IMR-90 (cell line): ENCODE measurements at regions of chr21 and their contacts with region 1.

Region 1: DNA sequence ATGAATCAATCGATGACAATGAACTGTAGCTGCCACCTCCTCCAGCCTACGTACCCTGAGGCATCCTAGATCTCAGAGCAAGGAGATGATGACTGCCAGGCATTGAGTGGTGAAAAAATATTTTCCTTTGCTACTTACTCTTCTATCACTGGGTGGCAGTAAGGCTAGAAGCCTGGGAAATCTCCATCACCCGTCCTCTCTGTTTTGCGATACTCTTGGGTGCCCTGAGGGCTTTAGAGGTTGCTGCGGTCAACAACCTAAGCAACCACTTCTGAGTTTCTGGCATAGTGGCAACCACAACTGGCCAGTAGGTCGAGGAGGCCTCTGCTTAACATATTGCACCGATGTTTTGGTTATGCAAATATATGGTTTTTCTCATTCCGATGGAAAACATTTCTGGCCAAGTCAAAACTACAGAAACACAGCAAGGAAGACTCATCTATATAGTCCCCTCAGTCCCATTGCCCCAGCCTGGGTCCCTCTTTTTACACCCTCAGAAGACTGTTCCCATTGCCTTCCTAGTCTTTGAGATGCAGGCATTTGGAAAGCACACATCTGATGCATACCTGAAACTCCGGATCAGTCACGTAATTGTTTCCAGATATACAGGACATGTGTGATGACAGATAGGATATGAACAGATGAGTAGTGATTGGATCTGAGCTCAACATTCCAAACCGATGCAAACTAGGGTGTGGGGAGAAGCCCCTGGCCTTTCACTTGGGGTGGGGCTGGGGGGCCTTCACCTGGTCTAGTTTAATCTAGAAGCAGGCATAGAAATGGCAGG is 136.8 kb downstream of the RUNX1 start:
- DNase-seq: no peak
- ATAC-seq: no peak
- H3K4me3 ChIP-seq: no peak overlapping the region
- H3K27ac ChIP-seq: no peak overlapping the region
- H3K4me1 ChIP-seq: peaks cover 25% of the 10 kb centered on the region
- H3K27me3 ChIP-seq: no peaks in the 10 kb centered on the region
- CTCF ChIP-seq: no peak
- POLR2A ChIP-seq: no peak
- RAD21 ChIP-seq: no peak

Region 2: DNA sequence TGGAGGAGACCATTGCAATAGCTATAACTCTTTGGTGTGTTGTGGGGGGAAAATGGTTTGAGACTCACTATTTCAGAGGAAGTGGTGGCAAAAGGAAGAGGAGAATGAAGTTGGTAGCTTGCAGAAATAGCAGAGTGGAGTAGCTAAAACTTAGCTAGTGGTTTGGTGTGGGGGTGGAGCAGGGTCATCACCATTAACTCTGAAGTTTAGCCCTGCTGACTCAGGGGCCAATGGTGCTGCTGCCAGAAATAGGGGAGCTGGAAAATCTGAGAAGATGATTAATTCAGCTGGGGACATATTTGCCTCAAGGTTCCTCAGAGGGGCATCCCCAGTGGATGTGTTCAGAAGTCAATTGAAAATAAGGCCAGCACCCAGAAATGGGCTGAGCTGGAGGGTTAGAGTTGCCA is 71.3 kb after region 1 on chr21:
- CTCF ChIA-PET with region 1: no interaction called
- POLR2A ChIA-PET with region 1: no interaction called
- dilution Hi-C with region 1: no loop called
- in situ Hi-C with region 1: no loop called
- intact Hi-C with region 1: loop called (anchors 5 kb)
- DNase-seq: peak; percentile 63
- ATAC-seq: peak; percentile 69
- H3K4me3 ChIP-seq: no peak overlapping the region
- H3K27ac ChIP-seq: peak overlapping the region; percentile 52
- H3K4me1 ChIP-seq: peaks cover 12% of the 10 kb centered on the region
- H3K27me3 ChIP-seq: no peaks in the 10 kb centered on the region
- CTCF ChIP-seq: no peak
- POLR2A ChIP-seq: no peak
- RAD21 ChIP-seq: no peak; the same call in 1 of the 2 replicates

Region 3: GRCh38 chr21:35163411-35163810 is 251.1 kb after region 1 on chr21:
- CTCF ChIA-PET with region 1: no interaction called
- POLR2A ChIA-PET with region 1: no interaction called
- dilution Hi-C with region 1: no loop called
- in situ Hi-C with region 1: no loop called
- intact Hi-C with region 1: no loop called
- DNase-seq: peak; percentile 59
- ATAC-seq: no peak
- H3K4me3 ChIP-seq: no peak overlapping the region
- H3K27ac ChIP-seq: no peak overlapping the region
- H3K4me1 ChIP-seq: no peaks in the 10 kb centered on the region
- H3K27me3 ChIP-seq: no peaks in the 10 kb centered on the region
- CTCF ChIP-seq: no peak
- POLR2A ChIP-seq: no peak
- RAD21 ChIP-seq: no peak

Region 4: GRCh38 chr21:35189077-35189863 is 276.9 kb after region 1 on chr21:
- CTCF ChIA-PET with region 1: no interaction called
- POLR2A ChIA-PET with region 1: no interaction called
- dilution Hi-C with region 1: no loop called
- in situ Hi-C with region 1: no loop called
- intact Hi-C with region 1: no loop called
- DNase-seq: peak; percentile 82
- ATAC-seq: peak; percentile 79
- H3K4me3 ChIP-seq: no peak overlapping the region
- H3K27ac ChIP-seq: no peak overlapping the region; the same call in 1 of the 2 replicates
- H3K4me1 ChIP-seq: no peaks in the 10 kb centered on the region; the same call in 1 of the 2 replicates
- H3K27me3 ChIP-seq: no peaks in the 10 kb centered on the region
- CTCF ChIP-seq: no peak
- POLR2A ChIP-seq: no peak
- RAD21 ChIP-seq: no peak

Region 5: DNA sequence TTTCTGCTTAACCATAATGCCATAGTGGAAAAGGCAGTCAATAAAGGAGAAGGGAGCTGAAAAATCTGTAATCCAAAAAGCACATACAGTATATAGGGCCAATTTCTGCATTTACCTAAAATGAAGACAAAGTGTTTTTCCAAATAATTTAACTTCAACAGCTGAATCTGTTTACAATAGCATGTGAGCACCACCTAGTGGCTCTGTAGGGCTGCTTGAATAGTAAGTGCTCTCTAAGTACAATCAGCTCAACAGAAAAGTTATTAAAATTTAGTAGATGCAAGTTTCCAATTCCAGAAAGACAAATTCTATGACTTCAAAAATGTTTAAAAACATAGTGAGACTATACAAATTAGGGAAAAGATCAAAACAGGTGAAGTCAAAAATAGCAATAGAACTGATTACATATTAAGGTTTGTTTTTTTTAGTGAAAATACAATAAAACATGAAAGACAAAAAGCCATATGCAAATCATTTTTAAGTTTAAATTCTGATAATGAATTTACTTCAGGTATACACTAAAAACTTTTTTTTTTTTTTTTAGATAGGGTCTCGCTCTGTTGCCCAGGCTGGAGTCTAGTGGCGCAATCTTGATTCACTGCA is 927.9 kb after region 1 on chr21:
- CTCF ChIA-PET with region 1: no interaction called
- POLR2A ChIA-PET with region 1: no interaction called
- dilution Hi-C with region 1: no loop called
- in situ Hi-C with region 1: no loop called
- intact Hi-C with region 1: no loop called
- DNase-seq: peak; percentile 91
- ATAC-seq: peak; percentile 85
- H3K4me3 ChIP-seq: no peak overlapping the region
- H3K27ac ChIP-seq: no peak overlapping the region
- H3K4me1 ChIP-seq: no peaks in the 10 kb centered on the region
- H3K27me3 ChIP-seq: no peaks in the 10 kb centered on the region
- CTCF ChIP-seq: peak; percentile 94
- POLR2A ChIP-seq: 0 out of 2 replicates have a peak, but pooled peaks have one; percentile 29
- RAD21 ChIP-seq: peak; percentile 90